Endothelial cell of umbilical vein (primary cell): ENCODE measurements at regions of chr2 and their contacts with region 1.

Region 1: GRCh38 chr2:16625201-16625729 is 40.4 kb downstream of the CYRIA start:
- DNase-seq: peak; percentile 67
- H3K4me3 ChIP-seq: no peak overlapping the region
- H3K27ac ChIP-seq: peak overlapping the region; percentile 54
- H3K4me1 ChIP-seq: peaks cover 31% of the 10 kb centered on the region
- H3K27me3 ChIP-seq: no peaks in the 10 kb centered on the region
- CTCF ChIP-seq: no peak
- POLR2A ChIP-seq: peak; percentile 17

Region 2: DNA sequence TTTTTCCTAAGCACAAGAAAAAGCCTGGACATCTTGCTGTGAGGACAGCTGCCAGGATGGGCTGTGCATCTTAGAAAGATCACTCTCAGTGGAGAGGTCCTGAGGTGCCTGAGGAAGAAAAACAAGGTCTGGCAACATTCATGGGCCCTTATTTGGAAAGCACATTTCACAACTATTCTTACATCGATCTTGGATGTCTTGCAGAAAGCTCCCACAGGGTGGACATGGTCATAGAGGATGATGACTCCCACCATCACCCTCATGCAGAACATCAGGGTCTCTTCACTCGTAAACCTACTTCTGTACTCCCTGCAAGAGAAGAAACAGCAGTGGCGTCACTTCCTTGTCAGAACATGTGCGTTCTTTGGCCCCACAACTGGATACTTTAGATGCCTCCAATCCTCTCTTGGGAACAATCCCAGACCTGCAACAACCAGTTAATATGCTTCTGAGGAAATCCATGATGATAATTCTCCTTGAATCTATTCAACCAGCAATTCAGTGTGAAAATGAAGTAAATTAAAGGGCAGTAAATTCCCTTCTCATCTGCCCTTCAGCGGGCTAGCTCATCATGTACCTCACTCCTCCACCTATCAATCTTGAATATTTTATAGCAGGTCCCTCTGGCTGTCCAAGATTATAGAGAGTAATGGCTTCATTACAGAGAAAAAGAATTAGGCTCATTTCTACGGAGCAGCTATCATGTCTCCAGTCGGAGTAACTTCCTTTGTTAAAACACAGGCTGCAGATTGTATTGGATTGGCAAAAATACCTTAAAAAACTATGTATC is 65.8 kb before region 1 on chr2:
- CTCF ChIA-PET with region 1: no interaction called
- POLR2A ChIA-PET with region 1: no interaction called
- dilution Hi-C with region 1: no loop called
- intact Hi-C with region 1: no loop called
- DNase-seq: no peak
- H3K4me3 ChIP-seq: no peak overlapping the region
- H3K27ac ChIP-seq: no peak overlapping the region
- H3K4me1 ChIP-seq: no peaks in the 10 kb centered on the region
- H3K27me3 ChIP-seq: no peaks in the 10 kb centered on the region
- CTCF ChIP-seq: no peak
- POLR2A ChIP-seq: no peak

Region 3: DNA sequence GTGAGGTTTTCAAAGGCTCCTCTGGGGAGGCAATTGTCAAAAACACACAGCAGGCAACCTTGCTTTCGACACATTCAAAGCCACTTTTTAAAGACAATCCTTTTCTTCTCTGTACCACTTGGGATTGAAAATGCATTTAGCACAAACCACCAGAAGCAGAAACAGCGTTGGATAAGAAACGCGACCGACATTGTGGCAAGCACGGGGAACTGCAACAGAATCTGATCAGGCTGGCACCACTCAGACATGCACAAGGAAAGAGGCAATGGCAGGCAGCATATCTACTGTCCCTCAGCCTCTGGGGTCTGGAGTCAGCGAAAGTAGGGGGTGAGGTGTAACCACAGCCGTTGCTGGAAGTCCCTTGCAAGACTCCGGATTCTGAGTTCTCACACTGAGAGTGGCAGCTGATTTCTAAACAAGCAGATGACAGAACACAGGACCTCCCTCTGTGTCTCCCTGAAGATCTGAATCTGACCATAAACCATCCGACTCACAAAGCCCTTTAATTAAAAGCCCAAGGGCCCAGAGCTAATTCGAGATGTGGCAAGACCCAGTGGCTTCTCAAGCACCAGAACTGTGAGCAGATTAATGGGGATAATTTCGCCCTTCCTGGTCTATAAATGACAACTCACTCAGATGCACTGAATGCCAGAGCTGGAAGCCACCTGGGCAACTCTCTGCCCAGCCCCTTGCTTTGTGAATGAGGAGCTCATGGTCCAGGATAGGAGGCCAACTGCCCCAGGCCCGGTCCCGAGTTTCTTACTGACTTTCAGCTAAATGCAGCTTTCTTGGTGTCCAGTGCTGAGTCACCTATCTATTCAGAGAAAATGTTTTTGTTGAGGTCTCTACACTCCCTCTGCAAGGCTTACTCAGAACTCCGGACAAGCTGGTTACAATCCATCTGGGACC is 10.8 kb after region 1 on chr2:
- CTCF ChIA-PET with region 1: interaction called, 14 read pairs
- POLR2A ChIA-PET with region 1: no interaction called
- dilution Hi-C with region 1: no loop called
- intact Hi-C with region 1: no loop called
- DNase-seq: no peak
- H3K4me3 ChIP-seq: no peak overlapping the region
- H3K27ac ChIP-seq: no peak overlapping the region
- H3K4me1 ChIP-seq: peaks cover 8% of the 10 kb centered on the region
- H3K27me3 ChIP-seq: no peaks in the 10 kb centered on the region
- CTCF ChIP-seq: no peak
- POLR2A ChIP-seq: no peak

Region 4: GRCh38 chr2:16650287-16651249 is 25.3 kb after region 1 on chr2:
- CTCF ChIA-PET with region 1: interaction called, 4 read pairs
- POLR2A ChIA-PET with region 1: interaction called, 3 read pairs
- dilution Hi-C with region 1: no loop called
- intact Hi-C with region 1: loop called (anchors 1 kb)
- DNase-seq: peak; percentile 90
- H3K4me3 ChIP-seq: peak overlapping the region in 2 of 3 experiments; percentile 12 to 48
- H3K27ac ChIP-seq: peak overlapping the region; percentile 80
- H3K4me1 ChIP-seq: peaks cover 42% of the 10 kb centered on the region
- H3K27me3 ChIP-seq: no peaks in the 10 kb centered on the region
- CTCF ChIP-seq: no peak
- POLR2A ChIP-seq: no peak

Region 5: GRCh38 chr2:17813742-17814473 is 1188.6 kb after region 1 on chr2:
- CTCF ChIA-PET with region 1: no interaction called
- POLR2A ChIA-PET with region 1: no interaction called
- dilution Hi-C with region 1: no loop called
- intact Hi-C with region 1: no loop called
- DNase-seq: no peak
- H3K4me3 ChIP-seq: no peak overlapping the region
- H3K27ac ChIP-seq: no peak overlapping the region
- H3K4me1 ChIP-seq: peaks cover 2% of the 10 kb centered on the region
- H3K27me3 ChIP-seq: peaks cover 0 to 1% of the 10 kb centered on the region in 2 experiments
- CTCF ChIP-seq: no peak
- POLR2A ChIP-seq: no peak